Activated T-helper 1 cell treated with anti-CD3 and anti-CD28 coated beads, Interleukin-12 subunit alpha, Interleukin-12 subunit beta, Interleukin-2, Interleukin-4 antibody, amounts not matched to agents 30 ng/mL and 10 ng/mL and 1 ng/mL, durations not matched to agents 14 hours and 24 hours and 36 hours (primary cell): ENCODE measurements at regions of chr11 and their contacts with region 1.

Region 1: DNA sequence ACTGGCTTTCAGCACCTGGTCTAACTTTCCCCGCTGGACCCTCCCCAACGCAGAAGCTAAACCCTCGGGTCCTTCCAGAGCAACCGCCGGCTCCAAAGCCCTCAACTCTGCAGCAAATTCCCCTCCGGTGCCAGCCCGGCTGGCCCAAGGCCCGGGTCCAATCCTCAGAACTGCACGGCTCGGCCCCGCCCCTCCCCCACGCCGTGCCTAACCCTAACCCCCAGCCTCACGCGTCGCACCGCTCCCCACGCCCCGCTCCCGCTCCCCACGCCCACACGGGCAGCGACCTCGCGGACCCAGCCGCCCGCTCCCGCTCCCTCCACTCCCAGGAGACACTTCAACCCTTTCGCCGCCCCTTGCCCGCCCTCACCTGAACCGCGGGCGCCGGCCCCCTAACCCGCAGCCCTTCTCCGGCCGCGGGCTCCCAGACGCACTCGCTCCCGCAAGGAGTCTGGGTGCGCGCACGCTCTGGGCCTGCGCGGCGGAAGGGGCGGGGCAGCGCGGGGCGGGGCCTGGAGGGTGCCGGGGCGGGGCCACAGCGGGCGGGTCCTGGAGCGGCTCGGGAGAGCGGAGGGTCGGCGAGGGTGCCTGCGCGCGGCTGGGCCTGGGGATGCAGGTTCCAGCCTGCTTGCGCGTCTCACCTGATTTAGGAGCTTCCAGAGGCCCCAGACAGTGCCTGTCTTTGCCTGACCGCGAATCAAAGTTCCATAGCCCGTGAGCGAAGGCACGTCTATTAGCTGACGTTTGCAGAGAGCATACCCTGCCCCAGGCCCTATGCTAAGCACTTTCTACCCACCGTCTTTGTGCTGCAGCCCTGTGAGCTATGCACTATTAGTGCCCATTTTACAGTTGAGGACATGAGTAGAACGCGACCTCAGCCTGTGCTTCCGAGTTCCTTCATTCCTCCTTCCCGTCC is at the start of gene NFRKB:
- DNase-seq: peak; percentile 84
- H3K4me3 Mint-ChIP-seq: peak within 1 kb of the TSS; percentile 92
- H3K27ac Mint-ChIP-seq: peak within 1 kb of the TSS; percentile 84
- H3K4me1 Mint-ChIP-seq: peaks cover 41% of the 10 kb centered on the region
- H3K27me3 Mint-ChIP-seq: peaks cover 5% of the 10 kb centered on the region
- total RNA-seq, gene NFRKB: 46.8 and 48.5 TPM in 2 replicates

Region 2: GRCh38 chr11:129279326-129280026 is 615.9 kb before region 1 on chr11:
- intact Hi-C with region 1: loop called (anchors 5 kb)
- DNase-seq: peak; percentile 74
- H3K4me3 Mint-ChIP-seq: peak overlapping the region; percentile 79
- H3K27ac Mint-ChIP-seq: peak overlapping the region; percentile 81
- H3K4me1 Mint-ChIP-seq: peaks cover 40% of the 10 kb centered on the region
- H3K27me3 Mint-ChIP-seq: peaks cover 29% of the 10 kb centered on the region

Region 3: DNA sequence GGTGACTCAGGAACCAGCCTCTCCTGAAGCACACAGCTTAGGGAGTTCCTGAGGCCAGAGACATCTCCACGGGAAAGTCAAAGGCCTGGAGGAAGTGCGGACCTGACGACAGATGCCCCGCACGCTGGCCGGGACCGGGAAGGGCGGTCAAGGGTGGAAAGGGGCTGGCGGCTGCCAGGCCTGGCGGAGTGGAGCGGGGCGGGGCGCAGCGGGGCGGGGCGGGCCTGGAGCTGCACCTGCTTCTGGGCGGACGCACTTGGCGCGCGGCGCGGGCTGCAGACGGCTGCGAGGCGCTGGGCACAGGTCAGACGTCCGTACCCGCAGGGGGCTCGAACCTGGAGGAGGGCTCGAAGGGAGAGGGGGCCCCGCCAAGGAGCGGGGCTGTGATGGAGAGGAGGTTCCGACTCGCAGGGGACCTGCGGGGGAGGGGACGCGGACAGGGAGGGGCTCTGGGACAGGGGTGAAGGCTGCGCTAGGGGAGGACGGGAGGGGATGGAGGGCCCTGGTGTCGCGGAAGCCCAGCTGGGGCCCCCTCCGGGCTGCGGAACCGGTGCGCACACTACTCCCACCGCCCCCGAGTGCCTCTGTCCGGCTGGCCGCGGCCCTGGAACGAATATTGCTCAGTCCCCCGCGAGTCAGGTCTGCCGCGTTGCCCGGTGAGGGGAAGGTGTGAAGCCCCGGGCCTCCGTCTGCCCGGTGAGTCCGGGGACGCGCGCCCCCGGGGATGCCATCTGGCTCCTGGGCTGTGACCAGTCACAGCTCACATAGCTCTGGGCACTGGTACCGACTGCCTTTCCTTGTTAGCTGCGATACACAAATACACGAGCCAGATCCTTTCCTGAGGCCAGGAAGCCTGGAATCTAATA is 79.6 kb before region 1 on chr11 and contains the start of gene TMEM45B:
- intact Hi-C with region 1: loop called (anchors 2 kb)
- DNase-seq: no peak
- H3K4me3 Mint-ChIP-seq: peak within 1 kb of the TSS; percentile 69
- H3K27ac Mint-ChIP-seq: peak within 1 kb of the TSS; percentile 67
- H3K4me1 Mint-ChIP-seq: peaks cover 26% of the 10 kb centered on the region
- H3K27me3 Mint-ChIP-seq: peaks cover 46% of the 10 kb centered on the region
- total RNA-seq, gene TMEM45B: 0.24 and 0.26 TPM in 2 replicates

Region 4: GRCh38 chr11:129853518-129854236 is 41.7 kb before region 1 on chr11:
- intact Hi-C with region 1: no loop called
- DNase-seq: peak; percentile 57
- H3K4me3 Mint-ChIP-seq: peak overlapping the region; percentile 53
- H3K27ac Mint-ChIP-seq: peak overlapping the region; percentile 79
- H3K4me1 Mint-ChIP-seq: peaks cover 38% of the 10 kb centered on the region
- H3K27me3 Mint-ChIP-seq: no peaks in the 10 kb centered on the region

Region 5: DNA sequence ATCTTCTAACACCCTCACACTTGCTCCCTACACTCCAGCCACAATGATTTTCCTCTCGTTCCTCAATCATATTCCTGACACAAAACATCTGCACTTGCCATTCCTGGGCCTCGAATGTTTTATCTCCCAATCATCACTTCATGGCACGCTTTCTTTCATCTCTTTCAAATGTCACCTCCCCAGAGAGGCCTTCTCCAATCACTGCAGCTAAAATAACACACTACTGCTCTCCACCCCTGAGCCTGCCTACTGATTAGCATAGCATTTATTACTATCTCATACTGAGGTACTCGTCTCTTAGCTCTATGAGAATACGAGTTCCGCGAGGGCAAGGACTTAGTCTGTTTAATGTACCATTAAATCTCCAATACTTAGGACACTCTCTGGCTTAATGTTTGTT is 23.5 kb before region 1 on chr11:
- intact Hi-C with region 1: no loop called
- DNase-seq: no peak
- H3K4me3 Mint-ChIP-seq: no peak overlapping the region
- H3K27ac Mint-ChIP-seq: no peak overlapping the region
- H3K4me1 Mint-ChIP-seq: no peaks in the 10 kb centered on the region
- H3K27me3 Mint-ChIP-seq: no peaks in the 10 kb centered on the region

Region 6: DNA sequence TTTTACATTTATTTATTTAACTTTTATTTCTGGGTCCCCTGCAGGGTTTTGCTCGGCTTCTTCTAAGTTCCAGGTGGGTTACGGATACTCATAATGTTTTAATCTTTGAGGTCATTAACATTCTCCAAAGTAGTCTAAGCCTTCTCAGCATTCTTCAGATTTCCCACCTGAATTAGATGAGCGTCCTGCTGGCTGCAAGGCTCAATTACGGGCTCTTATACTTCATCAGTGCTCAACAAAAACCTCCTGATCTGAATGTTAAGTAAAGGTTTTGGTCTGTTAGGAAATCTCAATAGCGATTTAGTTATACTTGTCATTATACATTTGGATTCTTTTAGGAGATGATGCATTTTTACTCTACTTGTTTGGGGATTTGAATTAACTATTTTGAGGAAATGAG is 27.3 kb after region 1 on chr11:
- intact Hi-C with region 1: loop called (anchors 2 kb)
- DNase-seq: no peak
- H3K4me3 Mint-ChIP-seq: no peak overlapping the region
- H3K27ac Mint-ChIP-seq: no peak overlapping the region
- H3K4me1 Mint-ChIP-seq: peaks cover 20% of the 10 kb centered on the region
- H3K27me3 Mint-ChIP-seq: no peaks in the 10 kb centered on the region